ENCODE measurements at regions of chr5 and their contacts with region 1.

Region 1: DNA sequence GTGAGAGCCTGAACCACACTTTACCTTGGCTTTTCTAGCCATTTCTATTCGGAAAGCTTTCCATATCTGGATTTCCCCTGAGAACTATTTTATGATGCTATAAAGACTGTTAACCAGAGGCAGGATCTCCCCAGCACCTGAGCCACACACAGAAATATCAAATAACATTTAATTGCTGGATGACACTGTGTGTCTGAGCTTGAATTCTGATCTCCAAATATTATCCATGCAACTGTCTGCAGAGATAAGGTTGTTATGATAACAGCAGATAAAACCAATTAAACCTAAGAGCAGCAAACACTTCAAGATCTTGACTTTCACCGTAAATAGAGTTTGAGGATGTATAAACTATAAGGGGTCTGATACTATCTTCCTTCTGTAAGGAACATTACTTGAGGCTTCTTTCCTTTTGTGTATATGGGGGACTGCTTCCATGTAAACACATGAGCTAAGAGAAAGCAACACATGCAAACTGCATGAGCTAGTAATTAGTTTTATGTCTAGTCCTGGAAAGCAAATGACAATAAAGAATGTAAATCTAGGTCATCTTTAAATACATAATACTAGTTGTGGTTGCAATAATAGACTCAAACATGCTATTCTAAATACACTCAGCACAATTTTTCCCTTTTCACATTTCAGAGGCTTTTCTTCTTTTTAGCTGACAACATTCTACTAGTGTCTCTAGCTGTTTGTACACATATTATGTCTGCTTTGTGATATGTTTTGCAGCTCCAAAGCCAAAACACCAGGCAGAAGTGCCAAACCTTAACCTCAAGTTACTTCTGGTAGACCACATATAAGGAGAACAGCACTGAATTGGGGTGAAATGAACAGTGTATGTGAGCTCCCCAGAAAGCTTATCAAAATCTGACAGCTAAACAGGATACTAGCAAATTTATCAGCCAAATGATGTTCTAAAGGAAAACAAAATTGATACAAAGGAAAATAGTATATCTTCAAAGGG is 136.5 kb downstream of the EFNA5 start:
- H3K4me3 ChIP-seq: no peak overlapping the region
- H3K27ac ChIP-seq: peak overlapping the region; percentile 39; the same call in 1 of the 2 replicates
- H3K4me1 ChIP-seq: peaks cover 41% of the 10 kb centered on the region
- CTCF ChIP-seq: no peak

Region 2: DNA sequence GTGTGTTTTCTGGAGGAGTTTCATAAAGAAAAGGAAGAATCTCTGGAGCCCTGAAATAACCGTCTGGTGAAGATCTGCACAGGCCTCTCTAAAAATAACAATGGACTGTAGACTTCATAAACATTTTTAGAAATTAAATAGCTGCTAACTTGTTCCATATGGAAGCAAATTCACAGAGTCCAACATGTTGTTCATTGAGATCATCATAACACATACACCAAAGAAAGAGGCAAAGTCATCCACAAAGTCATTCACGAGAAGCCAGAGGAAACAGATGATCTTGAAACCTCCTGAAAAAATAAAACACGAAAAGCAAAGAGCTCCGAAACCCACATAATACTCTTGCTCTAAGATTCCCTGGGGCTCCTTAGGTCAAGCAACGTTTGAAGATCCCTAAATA is 211.3 kb before region 1 on chr5:
- CTCF ChIA-PET with region 1: no interaction called
- POLR2A ChIA-PET with region 1: no interaction called
- H3K4me3 ChIP-seq: no peak overlapping the region
- H3K27ac ChIP-seq: no peak overlapping the region
- H3K4me1 ChIP-seq: peaks cover 6% of the 10 kb centered on the region
- CTCF ChIP-seq: no peak

Region 3: DNA sequence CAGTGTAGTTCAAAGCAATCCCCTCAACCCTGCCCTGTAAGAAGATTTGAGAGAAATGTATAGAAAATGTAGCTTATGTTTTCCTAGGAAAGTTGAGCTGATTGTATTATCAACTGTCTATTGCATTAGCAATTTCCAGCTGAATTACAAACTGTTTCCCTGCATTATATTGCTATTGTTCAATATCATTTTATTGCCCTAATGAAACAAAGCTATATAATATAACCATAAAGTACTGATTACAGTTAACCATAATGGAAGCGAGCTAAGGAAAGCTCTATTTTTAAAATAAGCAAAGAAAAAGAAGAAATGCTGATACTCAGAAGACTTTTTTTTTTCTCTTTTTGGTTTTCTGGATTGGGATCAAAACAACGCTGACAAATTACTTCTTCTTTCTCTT is 91.7 kb before region 1 on chr5:
- CTCF ChIA-PET with region 1: no interaction called
- POLR2A ChIA-PET with region 1: interaction called, 12 read pairs
- H3K4me3 ChIP-seq: no peak overlapping the region
- H3K27ac ChIP-seq: no peak overlapping the region
- H3K4me1 ChIP-seq: peaks cover 6% of the 10 kb centered on the region; the same call in 1 of the 2 replicates
- CTCF ChIP-seq: no peak

Region 4: GRCh38 chr5:107672211-107673038 is 138.2 kb after region 1 on chr5:
- CTCF ChIA-PET with region 1: no interaction called
- POLR2A ChIA-PET with region 1: interaction called, 13 read pairs
- H3K4me3 ChIP-seq: peak overlapping the region; percentile 64
- H3K27ac ChIP-seq: peak overlapping the region; percentile 99
- H3K4me1 ChIP-seq: peaks cover 4% of the 10 kb centered on the region
- CTCF ChIP-seq: peak; percentile 15; the same call in 1 of the 2 replicates

Measured in HEK293 (cell line).